Caco-2 (cell line): ENCODE measurements at regions of chr2 and their contacts with region 1.

Region 1: DNA sequence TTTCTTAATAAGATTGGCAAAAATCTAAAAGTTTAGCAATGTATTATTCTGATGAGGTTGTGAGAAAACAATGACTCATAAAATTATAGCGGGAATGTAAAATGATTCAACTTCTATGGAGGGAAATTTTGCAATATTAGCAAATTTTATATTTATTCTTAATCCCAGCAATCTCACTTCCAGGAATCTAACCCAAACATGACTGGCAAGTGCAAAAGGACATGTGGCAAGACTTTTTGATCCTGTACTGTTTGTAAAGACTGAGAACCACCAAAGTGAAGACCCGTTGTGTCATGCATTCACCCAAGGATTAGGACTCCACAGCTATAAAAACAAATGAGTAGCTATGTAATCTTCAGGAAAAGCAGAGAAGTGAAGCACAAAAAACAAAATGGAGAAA is 234.8 kb upstream of the KYNU start:
- DNase-seq: no peak
- H3K4me3 ChIP-seq: no peak overlapping the region
- H3K4me3 Mint-ChIP-seq: no peak overlapping the region
- H3K27ac Mint-ChIP-seq: no peak overlapping the region
- H3K4me1 ChIP-seq: no peaks in the 10 kb centered on the region
- H3K4me1 Mint-ChIP-seq: no peaks in the 10 kb centered on the region
- H3K27me3 ChIP-seq: no peaks in the 10 kb centered on the region
- H3K27me3 Mint-ChIP-seq: peaks cover 3% of the 10 kb centered on the region
- CTCF ChIP-seq: no peak

Region 2: GRCh38 chr2:142286606-142287005 is 356.0 kb before region 1 on chr2:
- CTCF ChIA-PET with region 1: no interaction called
- POLR2A ChIA-PET with region 1: no interaction called
- intact Hi-C with region 1: loop called (anchors 1 kb)
- DNase-seq: peak; percentile 42 to 50
- H3K4me3 ChIP-seq: no peak overlapping the region
- H3K4me3 Mint-ChIP-seq: no peak overlapping the region
- H3K27ac Mint-ChIP-seq: no peak overlapping the region
- H3K4me1 ChIP-seq: no peaks in the 10 kb centered on the region
- H3K4me1 Mint-ChIP-seq: peaks cover 7% of the 10 kb centered on the region
- H3K27me3 ChIP-seq: no peaks in the 10 kb centered on the region
- H3K27me3 Mint-ChIP-seq: no peaks in the 10 kb centered on the region
- CTCF ChIP-seq: peak; percentile 70 to 77

Region 3: GRCh38 chr2:142585785-142586184 is 56.9 kb before region 1 on chr2:
- CTCF ChIA-PET with region 1: no interaction called
- POLR2A ChIA-PET with region 1: no interaction called
- intact Hi-C with region 1: loop called (anchors 2 kb)
- DNase-seq: no peak
- H3K4me3 ChIP-seq: no peak overlapping the region
- H3K4me3 Mint-ChIP-seq: no peak overlapping the region
- H3K27ac Mint-ChIP-seq: no peak overlapping the region
- H3K4me1 ChIP-seq: 0 out of 2 replicates have a peak, but pooled peaks cover 5% of the 10 kb centered on the region
- H3K4me1 Mint-ChIP-seq: no peaks in the 10 kb centered on the region
- H3K27me3 ChIP-seq: no peaks in the 10 kb centered on the region
- H3K27me3 Mint-ChIP-seq: peaks cover 12% of the 10 kb centered on the region
- CTCF ChIP-seq: no peak

Region 4: DNA sequence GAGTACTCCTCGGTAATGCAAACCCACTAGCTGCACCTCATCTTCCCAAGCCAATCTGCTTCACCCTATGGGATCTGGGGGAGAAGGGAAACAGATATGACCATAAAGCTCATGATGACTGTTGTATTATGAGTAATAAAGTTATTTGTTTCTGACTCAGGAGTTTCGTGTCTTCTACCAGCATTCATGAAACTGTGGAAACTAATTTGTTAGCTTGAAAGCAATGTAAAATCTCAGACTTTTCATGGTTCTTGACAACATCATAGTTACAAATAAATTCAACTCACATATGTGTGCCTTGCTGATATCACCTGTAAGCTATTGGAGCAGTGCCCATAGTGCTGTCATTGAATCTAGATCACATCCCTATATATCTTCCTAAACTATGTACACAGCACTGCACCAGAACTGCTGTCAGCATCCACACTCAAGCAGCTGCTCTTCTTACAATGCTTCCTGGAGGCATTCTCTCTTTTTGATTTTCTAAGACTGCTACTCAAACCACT is 99.2 kb after region 1 on chr2:
- CTCF ChIA-PET with region 1: no interaction called
- POLR2A ChIA-PET with region 1: no interaction called
- intact Hi-C with region 1: no loop called
- DNase-seq: no peak
- H3K4me3 ChIP-seq: no peak overlapping the region
- H3K4me3 Mint-ChIP-seq: no peak overlapping the region
- H3K27ac Mint-ChIP-seq: no peak overlapping the region
- H3K4me1 ChIP-seq: no peaks in the 10 kb centered on the region
- H3K4me1 Mint-ChIP-seq: no peaks in the 10 kb centered on the region
- H3K27me3 ChIP-seq: no peaks in the 10 kb centered on the region
- H3K27me3 Mint-ChIP-seq: no peaks in the 10 kb centered on the region
- CTCF ChIP-seq: no peak